Activated CD4-positive, alpha-beta T cell treated with anti-CD3 and anti-CD28 coated beads, Interleukin-2, amount 10 ng/mL, durations not matched to agents 24 days and 14 days (primary cell): ENCODE measurements at regions of chr6 and their contacts with region 1.

Region 1: GRCh38 chr6:83067448-83068413 is at the start of gene DOP1A:
- DNase-seq: peak; percentile 99
- H3K4me3 Mint-ChIP-seq: peak within 1 kb of the TSS; percentile 91
- H3K27ac Mint-ChIP-seq: peak within 1 kb of the TSS; percentile 85
- H3K4me1 Mint-ChIP-seq: peaks cover 34% of the 10 kb centered on the region
- H3K27me3 Mint-ChIP-seq: no peaks in the 10 kb centered on the region
- total RNA-seq, gene DOP1A: 5.6 and 6.2 TPM in 2 replicates

Region 2: GRCh38 chr6:81752138-81752920 is 1315.4 kb before region 1 on chr6 and contains the start of gene TENT5A:
- intact Hi-C with region 1: loop called (anchors 5 kb)
- DNase-seq: peak; percentile 95
- H3K4me3 Mint-ChIP-seq: peak within 1 kb of the TSS; percentile 89
- H3K27ac Mint-ChIP-seq: peak within 1 kb of the TSS; percentile 74
- H3K4me1 Mint-ChIP-seq: peaks cover 21% of the 10 kb centered on the region
- H3K27me3 Mint-ChIP-seq: peaks cover 60% of the 10 kb centered on the region
- total RNA-seq, gene TENT5A: 0.30 and 0.90 TPM in 2 replicates

Region 3: GRCh38 chr6:82270881-82271645 is 796.7 kb before region 1 on chr6:
- intact Hi-C with region 1: loop called (anchors 2 kb)
- DNase-seq: no peak
- H3K4me3 Mint-ChIP-seq: no peak overlapping the region
- H3K27ac Mint-ChIP-seq: no peak overlapping the region
- H3K4me1 Mint-ChIP-seq: no peaks in the 10 kb centered on the region
- H3K27me3 Mint-ChIP-seq: peaks cover 8% of the 10 kb centered on the region

Region 4: GRCh38 chr6:83215131-83216047 is 147.7 kb after region 1 on chr6:
- intact Hi-C with region 1: loop called (anchors 1 kb)
- DNase-seq: peak; percentile 86
- H3K4me3 Mint-ChIP-seq: no peak overlapping the region
- H3K27ac Mint-ChIP-seq: no peak overlapping the region
- H3K4me1 Mint-ChIP-seq: peaks cover 3% of the 10 kb centered on the region
- H3K27me3 Mint-ChIP-seq: peaks cover 20% of the 10 kb centered on the region

Region 5: DNA sequence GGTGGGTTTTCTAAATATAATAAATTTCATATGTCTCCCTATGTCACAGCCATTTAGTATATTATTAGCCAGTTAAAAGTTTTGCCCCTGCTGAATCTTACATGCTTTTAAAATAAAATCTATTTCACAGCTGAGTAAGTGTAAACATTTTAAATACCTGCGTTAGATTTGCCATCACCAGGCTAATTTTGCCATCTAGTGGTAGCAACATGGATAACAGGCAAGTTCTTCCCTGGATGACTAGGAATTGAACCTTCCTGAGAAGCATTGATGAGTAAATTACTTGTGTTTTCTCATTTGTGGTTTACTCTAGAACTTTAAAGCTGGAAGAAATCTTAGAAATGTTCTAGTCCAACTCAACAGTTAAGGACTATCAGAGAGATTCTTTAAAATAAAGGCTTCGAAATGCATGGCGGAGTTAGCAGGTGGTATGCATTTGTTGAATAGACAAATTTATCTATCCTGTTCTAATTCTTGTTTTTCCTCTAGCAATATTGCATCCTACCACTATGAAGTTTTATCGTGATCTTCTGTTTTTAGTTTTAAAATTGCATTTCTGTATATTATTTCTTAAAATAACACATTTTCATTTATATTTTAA is 447.2 kb after region 1 on chr6:
- intact Hi-C with region 1: loop called (anchors 1 kb)
- DNase-seq: peak; percentile 75
- H3K4me3 Mint-ChIP-seq: no peak overlapping the region
- H3K27ac Mint-ChIP-seq: no peak overlapping the region
- H3K4me1 Mint-ChIP-seq: peaks cover 3% of the 10 kb centered on the region
- H3K27me3 Mint-ChIP-seq: peaks cover 35% of the 10 kb centered on the region